Activated T-helper 2 cell treated with anti-CD3 and anti-CD28 coated beads, Interferon-gamma antibody, Interleukin-2, Interleukin-4, amounts not matched to agents 10 μg/mL and 5 μg/mL and 100 μg/mL, durations not matched to agents 14 hours and 24 hours and 36 hours (primary cell): ENCODE measurements at regions of chr1 and their contacts with region 1.

Region 1: DNA sequence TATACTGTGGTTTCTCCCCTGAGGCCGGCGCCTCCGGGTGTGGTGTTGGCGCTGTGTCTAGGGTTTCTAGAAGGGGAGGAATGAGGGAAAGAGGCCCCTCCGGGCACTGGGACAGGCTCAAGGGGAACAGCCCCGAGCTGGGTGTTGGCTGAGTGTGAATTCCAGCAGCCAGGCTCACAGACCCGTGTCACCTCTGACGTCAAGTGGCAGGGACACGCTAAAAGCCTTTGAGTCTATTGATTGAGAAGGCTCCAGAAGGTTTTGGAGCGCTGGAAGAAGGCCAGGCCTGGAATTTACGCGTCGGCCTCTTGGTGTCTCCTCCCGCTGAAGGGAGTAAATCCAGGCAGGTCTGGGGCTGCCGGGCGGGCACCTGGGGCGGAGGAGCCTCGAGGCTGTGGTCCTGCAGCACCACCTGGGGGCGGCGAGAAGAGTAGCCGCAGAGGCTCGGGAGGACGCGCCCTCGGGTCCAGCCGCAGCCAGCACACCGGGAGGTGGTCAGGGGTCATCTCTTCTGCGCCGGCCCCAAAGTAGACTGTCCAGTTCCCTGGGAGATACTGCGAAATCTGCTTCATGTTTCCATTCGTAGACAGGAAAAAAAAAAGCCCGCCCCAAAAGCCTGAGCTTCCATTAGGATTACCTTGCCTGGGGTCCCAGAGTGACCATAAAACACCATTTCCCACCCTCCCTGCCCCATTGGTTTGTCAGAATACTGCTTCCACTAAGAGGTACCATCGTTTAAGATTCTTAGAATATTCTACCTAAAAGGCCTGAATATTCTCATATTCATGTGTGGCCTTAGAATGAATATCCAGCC is 61.7 kb downstream of the TLR5 start:
- DNase-seq: peak; percentile 59
- H3K4me3 Mint-ChIP-seq: peak overlapping the region; percentile 15
- H3K27ac Mint-ChIP-seq: no peak overlapping the region
- H3K4me1 Mint-ChIP-seq: no peaks in the 10 kb centered on the region
- H3K27me3 Mint-ChIP-seq: no peaks in the 10 kb centered on the region

Region 2: DNA sequence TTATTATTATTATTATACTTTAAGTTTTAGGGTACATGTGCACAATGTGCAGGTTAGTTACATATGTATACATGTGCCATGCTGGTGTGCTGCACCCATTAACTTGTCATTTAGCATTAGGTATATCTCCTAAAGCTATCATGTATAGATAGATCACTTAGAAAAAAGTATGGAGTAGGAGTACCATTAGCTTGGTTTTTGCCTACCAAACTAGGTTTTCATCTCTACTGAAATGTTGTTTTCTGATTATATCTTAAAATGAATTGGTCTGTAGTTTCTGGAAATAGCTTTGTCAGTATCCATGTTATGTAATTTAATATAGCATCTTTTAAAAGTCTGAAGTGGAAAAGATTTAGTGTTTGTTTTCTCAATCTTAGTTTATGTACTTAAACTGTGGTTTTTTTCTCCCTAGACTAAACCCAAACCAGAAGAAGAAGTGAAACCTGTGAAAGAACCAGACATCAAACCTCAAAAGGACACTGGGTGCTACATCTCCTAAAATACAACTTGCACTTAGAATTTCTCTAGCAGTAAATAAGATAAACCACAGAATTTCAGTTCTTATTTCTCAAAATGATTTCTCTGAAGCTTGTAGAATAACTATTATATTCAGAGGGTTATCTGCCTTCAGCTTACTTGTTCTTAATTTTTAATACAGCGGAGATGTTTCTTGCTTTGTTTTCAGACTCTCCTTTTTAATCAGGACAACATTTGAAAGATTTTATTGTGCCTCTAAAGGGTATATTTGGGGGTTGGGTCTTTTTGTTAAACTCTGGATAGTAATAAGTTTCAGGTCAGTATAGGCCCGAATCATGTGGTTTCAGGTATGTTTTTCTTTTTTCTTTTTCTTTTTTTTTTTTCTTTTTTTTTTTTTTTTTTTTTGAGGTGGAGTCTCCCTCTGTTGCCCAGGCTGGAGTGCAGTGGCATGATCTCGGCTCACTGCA is 348.9 kb before region 1 on chr1:
- intact Hi-C with region 1: loop called (anchors 5 kb)
- DNase-seq: no peak
- H3K4me3 Mint-ChIP-seq: no peak overlapping the region
- H3K27ac Mint-ChIP-seq: peak overlapping the region; percentile 2
- H3K4me1 Mint-ChIP-seq: peaks cover 14% of the 10 kb centered on the region
- H3K27me3 Mint-ChIP-seq: no peaks in the 10 kb centered on the region

Region 3: GRCh38 chr1:222792744-222793143 is 288.6 kb before region 1 on chr1:
- intact Hi-C with region 1: loop called (anchors 1 kb)
- DNase-seq: no peak
- H3K4me3 Mint-ChIP-seq: no peak overlapping the region
- H3K27ac Mint-ChIP-seq: no peak overlapping the region
- H3K4me1 Mint-ChIP-seq: peaks cover 15% of the 10 kb centered on the region
- H3K27me3 Mint-ChIP-seq: no peaks in the 10 kb centered on the region

Region 4: GRCh38 chr1:223683586-223684487 is 602.4 kb after region 1 on chr1:
- intact Hi-C with region 1: no loop called
- DNase-seq: no peak
- H3K4me3 Mint-ChIP-seq: no peak overlapping the region
- H3K27ac Mint-ChIP-seq: no peak overlapping the region
- H3K4me1 Mint-ChIP-seq: no peaks in the 10 kb centered on the region
- H3K27me3 Mint-ChIP-seq: peaks cover 33% of the 10 kb centered on the region